ENCODE measurements at regions of chr19 and their contacts with region 1.

Region 1: DNA sequence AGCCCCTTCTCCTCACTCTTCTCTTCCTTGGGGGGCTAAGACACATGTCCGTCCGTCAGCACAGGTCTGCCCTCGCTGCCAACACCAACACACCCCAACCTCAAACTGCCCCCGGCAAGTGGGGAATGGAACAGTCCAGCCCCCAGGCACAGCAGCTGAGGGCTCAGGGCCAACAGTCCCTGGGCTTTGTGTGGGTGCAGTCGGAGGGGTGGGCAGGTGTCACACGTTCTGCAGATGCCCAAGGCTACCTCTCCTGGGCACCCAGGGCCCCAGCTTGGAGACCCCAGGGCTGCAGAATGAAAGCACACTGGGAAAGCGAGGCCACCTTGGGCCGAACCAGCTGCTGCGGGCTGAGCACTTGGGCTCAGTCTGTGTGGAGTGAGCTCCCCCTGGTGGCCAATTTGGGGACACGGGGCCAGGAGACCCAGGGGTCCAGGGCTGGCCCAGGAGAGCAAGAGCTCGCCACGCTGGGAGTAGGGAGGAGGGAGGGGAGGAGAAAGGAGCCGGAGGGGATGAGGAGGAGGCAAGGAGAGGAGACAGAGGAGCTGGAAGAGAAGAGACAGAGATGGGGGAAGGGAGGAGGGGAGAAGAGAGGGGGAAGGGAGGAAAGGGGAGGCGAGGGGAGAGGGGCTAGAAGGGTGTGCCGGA is 14.0 kb upstream of the ATP8B3 start:
- DNase-seq: peak; percentile 79
- H3K4me3 Mint-ChIP-seq: no peak overlapping the region
- H3K27ac Mint-ChIP-seq: no peak overlapping the region
- H3K4me1 Mint-ChIP-seq: no peaks in the 10 kb centered on the region
- H3K27me3 Mint-ChIP-seq: no peaks in the 10 kb centered on the region

Region 2: GRCh38 chr19:1592755-1593500 is 233.1 kb before region 1 on chr19 and contains the start of gene MBD3:
- CTCF ChIA-PET with region 1: interaction called, 10 read pairs
- POLR2A ChIA-PET with region 1: no interaction called
- intact Hi-C with region 1: no loop called
- DNase-seq: peak; percentile 90
- H3K4me3 Mint-ChIP-seq: peak within 1 kb of the TSS; percentile 86
- H3K27ac Mint-ChIP-seq: peak within 1 kb of the TSS; percentile 84
- H3K4me1 Mint-ChIP-seq: peaks cover 16% of the 10 kb centered on the region
- H3K27me3 Mint-ChIP-seq: no peaks in the 10 kb centered on the region
- total RNA-seq, gene MBD3: 67.7 to 71.4 TPM

Region 3: GRCh38 chr19:1767464-1767933 is 58.5 kb before region 1 on chr19:
- CTCF ChIA-PET with region 1: interaction called, 14 read pairs
- POLR2A ChIA-PET with region 1: no interaction called
- intact Hi-C with region 1: no loop called
- DNase-seq: peak; percentile 68
- H3K4me3 Mint-ChIP-seq: no peak overlapping the region
- H3K27ac Mint-ChIP-seq: no peak overlapping the region
- H3K4me1 Mint-ChIP-seq: no peaks in the 10 kb centered on the region
- H3K27me3 Mint-ChIP-seq: peaks cover 66% of the 10 kb centered on the region

Region 4: DNA sequence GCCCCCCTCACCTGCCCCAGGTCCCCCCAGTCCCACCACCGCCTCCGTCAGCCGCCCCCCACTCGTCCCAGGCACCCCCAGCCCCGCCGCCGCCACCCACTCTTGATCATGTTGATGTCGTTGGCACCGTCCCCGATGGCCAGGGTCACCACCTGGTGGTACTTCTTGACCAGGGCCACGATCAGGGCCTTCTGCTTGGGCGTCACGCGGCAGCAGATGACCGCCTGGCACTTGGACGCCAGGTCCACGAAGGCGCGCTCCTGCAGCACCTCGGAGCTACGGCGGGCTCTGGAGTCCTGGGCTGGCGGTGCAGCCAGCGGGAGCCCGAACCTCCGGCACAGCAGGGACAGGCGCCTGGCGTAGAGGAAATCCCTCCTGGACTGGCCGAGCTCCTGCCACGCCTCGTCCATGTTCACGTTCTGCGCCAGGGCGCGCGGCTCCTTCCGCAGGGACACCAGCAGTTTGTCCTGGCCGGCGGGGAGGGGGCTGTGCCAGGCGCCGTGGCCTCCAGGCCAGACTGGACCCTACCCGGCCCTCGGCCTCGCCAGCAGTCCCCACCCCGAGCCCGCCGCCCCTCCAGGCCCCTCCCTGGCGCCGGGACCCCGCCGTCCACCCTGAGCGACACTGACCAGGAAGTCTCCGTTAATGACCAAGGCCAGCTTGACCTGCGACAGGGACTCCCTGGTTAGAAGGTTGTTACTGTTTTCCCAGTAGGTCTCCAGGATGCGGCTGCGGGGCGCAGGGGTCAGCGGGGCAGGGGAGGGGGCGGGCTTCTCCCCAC is 36.6 kb before region 1 on chr19:
- CTCF ChIA-PET with region 1: interaction called, 11 read pairs
- POLR2A ChIA-PET with region 1: no interaction called
- intact Hi-C with region 1: no loop called
- DNase-seq: no peak
- H3K4me3 Mint-ChIP-seq: no peak overlapping the region
- H3K27ac Mint-ChIP-seq: no peak overlapping the region
- H3K4me1 Mint-ChIP-seq: no peaks in the 10 kb centered on the region
- H3K27me3 Mint-ChIP-seq: peaks cover 5% of the 10 kb centered on the region

Region 5: DNA sequence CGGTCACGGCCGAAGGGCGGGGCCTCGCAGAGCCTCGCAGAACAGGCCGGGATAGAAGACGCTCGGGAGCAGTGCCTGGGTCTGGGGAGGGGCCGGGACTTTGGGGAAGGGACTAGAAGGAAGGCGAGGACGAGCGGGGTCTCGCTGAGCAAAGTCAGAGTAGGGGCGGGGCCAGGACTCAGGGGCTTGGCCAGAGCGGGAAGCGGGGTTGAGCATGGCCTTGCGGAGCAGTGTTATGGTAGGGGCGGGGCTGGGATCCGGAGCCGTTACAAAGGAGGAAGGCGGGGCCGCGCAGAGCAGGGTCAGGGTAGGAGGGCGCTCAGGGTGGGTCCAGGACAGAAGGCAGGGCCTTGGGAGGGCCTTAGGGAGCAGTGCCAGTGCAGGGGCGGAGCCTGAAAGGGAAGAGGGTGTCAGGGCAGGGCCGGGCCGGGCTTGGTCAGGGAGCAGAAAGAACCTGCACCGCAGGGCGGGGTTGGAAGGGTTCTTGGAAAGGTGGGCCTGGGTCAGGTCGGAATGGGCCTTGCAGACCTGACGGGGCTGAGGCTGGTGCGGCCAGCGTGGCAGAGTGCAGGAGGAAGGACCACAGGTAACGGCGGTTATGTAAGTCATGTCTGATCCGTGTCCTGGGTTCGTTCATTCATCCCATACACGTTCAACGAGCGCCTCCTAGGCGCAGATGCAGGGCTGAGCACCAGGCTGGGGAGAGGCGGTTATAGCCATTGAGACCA is 13.4 kb before region 1 on chr19:
- CTCF ChIA-PET with region 1: interaction called, 18 read pairs
- POLR2A ChIA-PET with region 1: no interaction called
- intact Hi-C with region 1: no loop called
- DNase-seq: peak; percentile 95
- H3K4me3 Mint-ChIP-seq: peak overlapping the region; percentile 84
- H3K27ac Mint-ChIP-seq: peak overlapping the region; percentile 87
- H3K4me1 Mint-ChIP-seq: peaks cover 16% of the 10 kb centered on the region
- H3K27me3 Mint-ChIP-seq: no peaks in the 10 kb centered on the region

Measured in activated CD4-positive, alpha-beta memory T cell treated with anti-CD3 and anti-CD28 coated beads for 36 hours (primary cell).